Heart right ventricle (tissue), 16 donors: ENCODE measurements at regions of chr4 and their contacts with region 1.

Region 1: GRCh38 chr4:72505314-72505744 is 63.7 kb downstream of the ADAMTS3 start:
- DNase-seq: peak in 1 of 2 donors; percentile 4
- ATAC-seq: peak; percentile 44 to 70 (median 56)
- H3K4me3 ChIP-seq: no peak overlapping the region
- H3K27ac ChIP-seq: no peak overlapping the region
- H3K4me1 ChIP-seq: no peaks in the 10 kb centered on the region
- H3K27me3 ChIP-seq: peaks cover 0 to 3% (median 0%) of the 10 kb centered on the region in 7 donors
- CTCF ChIP-seq: peak; percentile 37 to 76 (median 71)

Region 2: DNA sequence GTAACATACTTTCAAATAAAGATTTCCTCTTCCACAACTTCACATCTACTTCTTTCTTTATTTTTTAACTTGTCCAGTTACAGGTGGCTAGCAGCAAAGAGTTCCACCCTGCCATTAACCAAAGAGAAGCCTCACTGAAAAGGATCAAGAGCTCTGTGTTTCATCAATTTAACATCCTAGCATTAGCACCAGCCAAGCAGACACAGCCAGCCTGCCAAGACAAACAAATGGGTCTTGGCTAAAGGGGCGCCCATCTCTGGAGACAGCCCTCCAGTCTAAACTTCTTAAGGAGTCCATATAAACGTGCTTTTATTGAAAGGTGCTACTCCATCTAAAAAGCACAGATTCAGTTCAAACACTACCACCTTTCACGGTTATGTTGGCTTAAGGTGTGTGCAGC is 41.6 kb before region 1 on chr4:
- intact Hi-C with region 1: loop called in 1 of 10 experiments (anchors 1 kb)
- DNase-seq: no peak
- ATAC-seq: no peak
- H3K4me3 ChIP-seq: no peak overlapping the region
- H3K27ac ChIP-seq: no peak overlapping the region
- H3K4me1 ChIP-seq: no peaks in the 10 kb centered on the region
- H3K27me3 ChIP-seq: no peaks in the 10 kb centered on the region
- CTCF ChIP-seq: no peak

Region 3: GRCh38 chr4:72701987-72702819 is 196.9 kb after region 1 on chr4:
- intact Hi-C with region 1: loop called in 1 of 10 experiments (anchors 10 kb)
- DNase-seq: peak in 1 of 2 donors; percentile 26
- ATAC-seq: peak in 1 of 8 donors; percentile 47
- H3K4me3 ChIP-seq: peak overlapping the region in 9 of 10 donors; percentile 2 to 49 (median 41)
- H3K27ac ChIP-seq: no peak overlapping the region
- H3K4me1 ChIP-seq: peaks cover 0 to 6% (median 0%) of the 10 kb centered on the region in 9 donors
- H3K27me3 ChIP-seq: no peaks in the 10 kb centered on the region
- CTCF ChIP-seq: peak in 7 of 9 donors; percentile 55 to 76 (median 70)

Region 4: GRCh38 chr4:72886602-72887001 is 381.3 kb after region 1 on chr4:
- intact Hi-C with region 1: loop called in 1 of 10 experiments (anchors 10 kb)
- DNase-seq: no peak
- ATAC-seq: no peak
- H3K4me3 ChIP-seq: no peak overlapping the region
- H3K27ac ChIP-seq: no peak overlapping the region
- H3K4me1 ChIP-seq: no peaks in the 10 kb centered on the region
- H3K27me3 ChIP-seq: no peaks in the 10 kb centered on the region
- CTCF ChIP-seq: peak in 5 of 9 donors; percentile 10 to 30 (median 23)

Region 5: GRCh38 chr4:72919937-72920336 is 414.6 kb after region 1 on chr4:
- intact Hi-C with region 1: loop called in 1 of 10 experiments (anchors 10 kb)
- DNase-seq: no peak
- ATAC-seq: no peak
- H3K4me3 ChIP-seq: no peak overlapping the region
- H3K27ac ChIP-seq: no peak overlapping the region
- H3K4me1 ChIP-seq: no peaks in the 10 kb centered on the region
- H3K27me3 ChIP-seq: no peaks in the 10 kb centered on the region
- CTCF ChIP-seq: no peak